ENCODE measurements at regions of chr11 and their contacts with region 1.

Region 1: GRCh38 chr11:107538821-107539220 is 26.7 kb downstream of the ALKBH8 start:
- DNase-seq: no peak
- CTCF ChIP-seq: no peak

Region 2: DNA sequence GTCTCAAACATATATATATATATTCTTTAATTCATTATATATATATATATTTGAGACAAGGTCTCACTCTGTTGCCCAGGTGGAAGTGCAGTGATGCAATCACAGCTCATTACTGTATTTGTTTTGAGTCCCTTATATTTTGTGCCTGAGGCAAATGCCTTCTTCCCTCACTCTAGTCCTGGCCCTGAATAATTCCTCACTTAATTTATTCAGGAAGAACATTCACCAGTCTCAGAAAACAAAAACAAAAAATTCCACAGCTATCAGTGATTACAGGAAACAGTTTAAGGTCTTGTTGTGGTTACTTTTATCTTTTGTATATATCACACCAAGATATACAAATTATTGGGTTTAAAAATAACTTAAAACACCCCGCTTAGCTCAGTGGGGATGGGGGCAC is 236.9 kb before region 1 on chr11:
- CTCF ChIA-PET with region 1: no interaction called
- POLR2A ChIA-PET with region 1: no interaction called
- DNase-seq: no peak
- CTCF ChIP-seq: no peak

Region 3: GRCh38 chr11:107549253-107549953 is 10.6 kb after region 1 on chr11:
- CTCF ChIA-PET with region 1: interaction called, 11 read pairs
- POLR2A ChIA-PET with region 1: no interaction called
- DNase-seq: peak; percentile 35
- CTCF ChIP-seq: peak; percentile 85

Measured in GM10248 (cell line).